ENCODE measurements at regions of chr20 and their contacts with region 1.

Region 1: DNA sequence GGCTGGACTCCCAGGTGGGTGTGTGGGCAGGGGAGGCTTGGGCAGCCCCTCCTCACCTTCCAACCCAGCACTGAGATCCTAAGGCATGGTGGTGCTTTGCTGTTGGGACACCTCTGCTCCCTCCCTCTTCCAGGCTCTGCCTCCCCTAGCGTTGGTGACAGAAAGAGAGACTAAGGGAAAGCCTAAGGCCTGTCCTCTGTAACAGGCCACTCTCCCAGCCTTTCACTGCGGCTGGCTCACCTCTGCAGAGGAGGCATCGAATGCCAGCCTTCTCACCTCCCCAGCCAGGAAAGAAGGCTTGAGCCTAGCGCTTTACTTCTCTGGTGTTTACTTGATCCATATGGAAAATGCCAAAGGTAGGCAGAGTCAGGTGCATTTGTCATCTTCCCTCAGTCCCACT is 3.5 kb upstream of the CDH26 start:
- DNase-seq: no peak
- H3K4me3 ChIP-seq: no peak overlapping the region
- H3K27ac ChIP-seq: no peak overlapping the region
- H3K4me1 ChIP-seq: no peaks in the 10 kb centered on the region
- H3K27me3 ChIP-seq: no peaks in the 10 kb centered on the region
- CTCF ChIP-seq: no peak

Region 2: GRCh38 chr20:59997896-59998295 is 43.2 kb after region 1 on chr20:
- intact Hi-C with region 1: loop called (anchors 1 kb)
- DNase-seq: no peak
- H3K4me3 ChIP-seq: no peak overlapping the region
- H3K27ac ChIP-seq: no peak overlapping the region
- H3K4me1 ChIP-seq: no peaks in the 10 kb centered on the region
- H3K27me3 ChIP-seq: no peaks in the 10 kb centered on the region
- CTCF ChIP-seq: no peak

Region 3: GRCh38 chr20:61052195-61052750 is 1097.6 kb after region 1 on chr20:
- intact Hi-C with region 1: loop called (anchors 5 kb)
- DNase-seq: peak in 1 of 2 donors; percentile 5
- H3K4me3 ChIP-seq: no peak overlapping the region
- H3K27ac ChIP-seq: no peak overlapping the region
- H3K4me1 ChIP-seq: no peaks in the 10 kb centered on the region
- H3K27me3 ChIP-seq: peaks cover 0 to 6% of the 10 kb centered on the region in 2 donors
- CTCF ChIP-seq: no peak

Measured in tibial artery (tissue), 4 donors.